MCF 10A (cell line): ENCODE measurements at regions of chr6 and their contacts with region 1.

Region 1: GRCh38 chr6:87701676-87702588 is at the start of gene AKIRIN2:
- DNase-seq: peak; percentile 98
- H3K4me3 Mint-ChIP-seq: peak within 1 kb of the TSS; percentile 83
- H3K27ac Mint-ChIP-seq: peak within 1 kb of the TSS; percentile 89
- H3K4me1 Mint-ChIP-seq: peaks cover 17% of the 10 kb centered on the region
- H3K27me3 Mint-ChIP-seq: no peaks in the 10 kb centered on the region
- CTCF ChIP-seq: no peak
- total RNA-seq, gene AKIRIN2: 47.6 and 48.1 TPM in 2 replicates

Region 2: DNA sequence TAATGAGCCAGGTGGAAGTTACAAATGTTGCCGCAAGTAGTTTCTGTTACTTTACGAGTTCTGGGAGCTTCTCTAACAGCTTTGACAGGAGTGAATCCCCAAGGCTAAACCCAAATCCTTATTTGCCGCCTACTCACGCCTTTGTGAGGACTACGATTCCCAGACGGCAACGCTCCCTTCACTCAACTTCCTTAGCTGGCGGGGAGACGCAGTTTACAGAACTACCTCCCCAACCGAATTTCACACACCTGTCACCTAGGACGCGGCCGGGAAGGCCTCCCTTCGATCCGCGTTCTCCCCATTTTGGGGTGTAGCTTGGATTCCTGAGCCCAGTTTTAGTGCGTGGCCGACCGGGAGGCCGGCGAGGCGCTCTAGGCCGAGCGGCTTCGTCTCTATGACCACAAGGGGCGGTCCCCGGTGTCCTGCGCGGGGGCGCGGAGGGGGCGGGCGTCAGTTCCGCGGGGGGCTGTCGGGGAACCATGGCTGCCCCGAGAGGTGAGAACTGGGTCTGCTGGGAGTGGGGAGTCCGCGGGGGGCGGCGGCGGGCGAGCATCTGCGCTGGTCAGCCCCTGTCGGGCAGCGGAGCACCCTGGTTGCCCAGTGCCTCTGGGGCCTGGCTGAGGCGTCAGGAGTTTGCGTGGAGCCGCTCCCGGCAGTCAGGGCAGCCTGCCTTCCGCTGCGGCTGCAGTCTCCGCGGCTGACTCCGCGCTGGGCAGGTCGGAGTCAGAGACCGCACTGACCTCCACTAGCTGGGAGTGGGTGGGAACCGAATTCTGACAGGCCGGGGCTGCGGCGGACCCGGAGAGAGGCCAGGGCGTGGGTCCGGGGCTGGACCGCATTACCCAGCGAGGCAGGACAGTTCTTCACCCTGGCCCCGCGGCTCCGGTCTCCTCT is 229.2 kb before region 1 on chr6 and contains the start of gene SLC35A1:
- CTCF ChIA-PET with region 1: no interaction called
- POLR2A ChIA-PET with region 1: interaction called, 6 read pairs
- intact Hi-C with region 1: loop called (anchors 10 kb)
- DNase-seq: peak; percentile 75
- H3K4me3 Mint-ChIP-seq: peak within 1 kb of the TSS; percentile 93
- H3K27ac Mint-ChIP-seq: peak within 1 kb of the TSS; percentile 98
- H3K4me1 Mint-ChIP-seq: peaks cover 8% of the 10 kb centered on the region
- H3K27me3 Mint-ChIP-seq: peaks cover 7% of the 10 kb centered on the region
- CTCF ChIP-seq: no peak
- total RNA-seq, gene SLC35A1: 10.3 and 12.1 TPM in 2 replicates

Region 3: GRCh38 chr6:87714093-87714809 is 12.3 kb after region 1 on chr6:
- CTCF ChIA-PET with region 1: interaction called, 5 read pairs
- POLR2A ChIA-PET with region 1: interaction called, 36 read pairs
- intact Hi-C with region 1: no loop called
- DNase-seq: peak; percentile 96
- H3K4me3 Mint-ChIP-seq: no peak overlapping the region
- H3K27ac Mint-ChIP-seq: peak overlapping the region; percentile 85
- H3K4me1 Mint-ChIP-seq: peaks cover 12% of the 10 kb centered on the region
- H3K27me3 Mint-ChIP-seq: no peaks in the 10 kb centered on the region
- CTCF ChIP-seq: no peak

Region 4: GRCh38 chr6:87731818-87732661 is 30.1 kb after region 1 on chr6:
- CTCF ChIA-PET with region 1: interaction called, 4 read pairs
- POLR2A ChIA-PET with region 1: interaction called, 76 read pairs
- intact Hi-C with region 1: loop called (anchors 1 kb)
- DNase-seq: peak; percentile 99
- H3K4me3 Mint-ChIP-seq: peak overlapping the region; percentile 21
- H3K27ac Mint-ChIP-seq: peak overlapping the region; percentile 90
- H3K4me1 Mint-ChIP-seq: peaks cover 42% of the 10 kb centered on the region
- H3K27me3 Mint-ChIP-seq: no peaks in the 10 kb centered on the region
- CTCF ChIP-seq: no peak

Region 5: DNA sequence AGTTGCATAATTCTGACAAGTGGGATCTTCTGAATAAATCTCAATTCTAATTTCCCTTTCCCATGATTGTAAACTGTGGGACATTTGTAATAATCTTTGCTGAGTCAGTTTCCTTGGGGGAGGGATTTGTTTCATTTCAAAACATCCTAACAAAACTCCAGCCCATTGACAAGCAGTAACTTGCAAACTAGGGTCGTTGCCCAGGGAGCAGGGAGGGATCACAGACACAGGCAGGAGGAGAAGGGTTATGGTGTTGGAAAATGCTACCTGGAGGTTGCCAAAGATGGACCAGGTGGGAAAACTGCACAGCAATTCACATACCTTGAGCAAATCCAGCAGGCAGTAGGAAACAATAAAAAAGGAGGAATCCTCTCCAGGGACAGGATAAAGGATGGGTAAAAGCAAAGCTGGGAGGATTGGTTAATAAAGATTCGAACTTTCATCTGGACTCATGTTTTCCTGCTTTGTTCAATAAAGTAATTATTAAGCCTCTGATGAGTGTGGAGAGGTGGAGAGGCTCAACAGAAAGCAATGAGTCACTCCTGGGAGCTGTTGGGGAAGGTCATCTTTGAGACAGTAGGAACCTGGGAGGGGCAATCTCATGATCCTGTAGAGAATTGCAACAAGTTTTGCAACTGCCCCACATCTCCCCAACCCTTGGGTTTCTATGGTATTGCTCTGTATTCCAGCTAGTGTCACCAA is 87.4 kb after region 1 on chr6:
- CTCF ChIA-PET with region 1: interaction called, 6 read pairs
- POLR2A ChIA-PET with region 1: interaction called, 11 read pairs
- intact Hi-C with region 1: loop called (anchors 1 kb)
- DNase-seq: peak; percentile 92
- H3K4me3 Mint-ChIP-seq: no peak overlapping the region
- H3K27ac Mint-ChIP-seq: peak overlapping the region; percentile 40
- H3K4me1 Mint-ChIP-seq: peaks cover 18% of the 10 kb centered on the region
- H3K27me3 Mint-ChIP-seq: no peaks in the 10 kb centered on the region
- CTCF ChIP-seq: no peak

Region 6: GRCh38 chr6:87832025-87832825 is 130.3 kb after region 1 on chr6:
- CTCF ChIA-PET with region 1: no interaction called
- POLR2A ChIA-PET with region 1: interaction called, 5 read pairs
- intact Hi-C with region 1: loop called (anchors 1 kb)
- DNase-seq: peak; percentile 32
- H3K4me3 Mint-ChIP-seq: peak overlapping the region; percentile 75
- H3K27ac Mint-ChIP-seq: peak overlapping the region; percentile 76
- H3K4me1 Mint-ChIP-seq: no peaks in the 10 kb centered on the region
- H3K27me3 Mint-ChIP-seq: peaks cover 17% of the 10 kb centered on the region
- CTCF ChIP-seq: peak; percentile 6